ENCODE measurements at regions of chr22 and their contacts with region 1.

Region 1: DNA sequence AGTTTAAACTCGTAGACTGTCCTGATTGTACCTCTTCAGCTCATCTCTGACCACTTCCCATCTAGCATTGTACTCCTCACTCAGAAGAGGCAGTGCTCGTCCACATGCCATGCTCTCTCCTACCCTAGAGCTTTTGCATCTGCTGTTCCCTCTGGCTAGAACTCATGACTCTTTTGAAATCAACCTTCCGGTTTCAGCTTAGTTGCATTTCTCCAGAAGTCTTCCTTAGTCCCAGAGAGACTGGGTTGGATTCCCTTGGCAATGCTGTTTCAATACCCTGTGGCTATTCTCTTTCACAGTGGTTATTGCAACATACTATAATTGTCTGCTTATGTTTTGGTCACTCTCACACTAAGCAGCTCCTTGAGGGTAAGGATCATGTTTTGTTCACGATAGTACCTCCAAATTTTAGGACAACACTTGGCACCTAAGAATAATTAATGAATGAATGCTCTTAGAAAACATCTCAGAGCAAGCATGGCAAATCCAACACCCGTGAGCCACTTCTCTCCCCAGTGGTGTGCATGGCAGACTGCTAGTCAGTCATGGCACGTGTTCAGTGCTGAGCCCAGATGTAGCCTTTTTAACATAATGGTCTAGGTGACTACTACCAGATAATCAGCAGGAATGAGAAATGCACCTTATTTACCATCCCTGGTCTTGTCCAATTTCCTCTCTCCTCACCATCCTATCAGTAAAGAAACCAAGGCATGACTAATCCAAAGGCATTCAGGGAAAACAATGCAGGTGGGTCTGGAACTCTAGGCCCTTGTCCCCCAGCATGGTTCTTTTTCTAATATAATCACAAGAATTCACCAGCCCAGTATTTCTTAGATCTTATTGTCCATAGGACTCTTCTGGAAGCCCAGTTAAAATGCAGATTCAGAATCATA is 14.5 kb downstream of the SEPTIN3 start:
- DNase-seq: peak in 1 of 2 experiments; percentile 68
- H3K4me3 ChIP-seq: no peak overlapping the region
- H3K27ac ChIP-seq: no peak overlapping the region
- H3K4me1 ChIP-seq: peaks cover 13% of the 10 kb centered on the region
- H3K27me3 ChIP-seq: no peaks in the 10 kb centered on the region
- CTCF ChIP-seq: no peak

Region 2: DNA sequence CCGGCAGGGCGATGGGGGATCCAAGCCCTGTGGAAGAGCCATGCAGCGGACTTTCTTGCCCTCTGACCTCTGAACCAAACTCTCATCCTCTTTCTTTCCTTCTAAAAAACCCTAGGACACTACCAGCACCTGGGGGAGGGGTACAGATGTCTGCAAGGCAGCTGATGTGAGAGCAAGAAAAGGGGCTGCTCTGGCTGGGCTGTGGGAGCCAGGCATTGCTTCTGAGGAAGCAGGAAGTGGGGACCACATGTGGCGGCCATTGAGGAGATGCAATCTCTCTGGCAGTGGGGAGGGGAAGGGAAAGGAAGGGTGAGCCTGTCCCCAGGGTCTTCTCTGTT is 1953.0 kb before region 1 on chr22:
- CTCF ChIA-PET with region 1: no interaction called
- POLR2A ChIA-PET with region 1: interaction called, 12 read pairs
- intact Hi-C with region 1: no loop called
- DNase-seq: no peak
- H3K4me3 ChIP-seq: no peak overlapping the region
- H3K27ac ChIP-seq: no peak overlapping the region
- H3K4me1 ChIP-seq: no peaks in the 10 kb centered on the region
- H3K27me3 ChIP-seq: no peaks in the 10 kb centered on the region
- CTCF ChIP-seq: no peak

Region 3: GRCh38 chr22:41369837-41370236 is 613.9 kb before region 1 on chr22:
- CTCF ChIA-PET with region 1: no interaction called
- POLR2A ChIA-PET with region 1: no interaction called
- intact Hi-C with region 1: no loop called
- DNase-seq: no peak
- H3K4me3 ChIP-seq: no peak overlapping the region
- H3K27ac ChIP-seq: no peak overlapping the region
- H3K4me1 ChIP-seq: peaks cover 16% of the 10 kb centered on the region
- H3K27me3 ChIP-seq: no peaks in the 10 kb centered on the region
- CTCF ChIP-seq: no peak

Measured in PC-9 (cell line).